ENCODE measurements at regions of chr9 and their contacts with region 1.

Region 1: GRCh38 chr9:131739980-131740648 is at the start of gene RAPGEF1:
- DNase-seq: peak; percentile 80
- H3K4me3 Mint-ChIP-seq: peak within 1 kb of the TSS; percentile 84
- H3K27ac Mint-ChIP-seq: peak within 1 kb of the TSS; percentile 87
- H3K4me1 Mint-ChIP-seq: peaks cover 61% of the 10 kb centered on the region
- H3K27me3 Mint-ChIP-seq: no peaks in the 10 kb centered on the region
- total RNA-seq, gene RAPGEF1: 128 to 129 TPM

Region 2: GRCh38 chr9:131590908-131591844 is 148.9 kb before region 1 on chr9:
- CTCF ChIA-PET with region 1: interaction called, 62 read pairs
- POLR2A ChIA-PET with region 1: no interaction called
- DNase-seq: peak; percentile 81
- H3K4me3 Mint-ChIP-seq: no peak overlapping the region
- H3K27ac Mint-ChIP-seq: peak overlapping the region; percentile 82
- H3K4me1 Mint-ChIP-seq: peaks cover 42% of the 10 kb centered on the region
- H3K27me3 Mint-ChIP-seq: no peaks in the 10 kb centered on the region

Region 3: GRCh38 chr9:131603199-131603598 is 136.9 kb before region 1 on chr9:
- CTCF ChIA-PET with region 1: interaction called, 15 read pairs
- POLR2A ChIA-PET with region 1: no interaction called
- DNase-seq: no peak
- H3K4me3 Mint-ChIP-seq: no peak overlapping the region
- H3K27ac Mint-ChIP-seq: peak overlapping the region; percentile 13
- H3K4me1 Mint-ChIP-seq: no peaks in the 10 kb centered on the region
- H3K27me3 Mint-ChIP-seq: no peaks in the 10 kb centered on the region

Region 4: DNA sequence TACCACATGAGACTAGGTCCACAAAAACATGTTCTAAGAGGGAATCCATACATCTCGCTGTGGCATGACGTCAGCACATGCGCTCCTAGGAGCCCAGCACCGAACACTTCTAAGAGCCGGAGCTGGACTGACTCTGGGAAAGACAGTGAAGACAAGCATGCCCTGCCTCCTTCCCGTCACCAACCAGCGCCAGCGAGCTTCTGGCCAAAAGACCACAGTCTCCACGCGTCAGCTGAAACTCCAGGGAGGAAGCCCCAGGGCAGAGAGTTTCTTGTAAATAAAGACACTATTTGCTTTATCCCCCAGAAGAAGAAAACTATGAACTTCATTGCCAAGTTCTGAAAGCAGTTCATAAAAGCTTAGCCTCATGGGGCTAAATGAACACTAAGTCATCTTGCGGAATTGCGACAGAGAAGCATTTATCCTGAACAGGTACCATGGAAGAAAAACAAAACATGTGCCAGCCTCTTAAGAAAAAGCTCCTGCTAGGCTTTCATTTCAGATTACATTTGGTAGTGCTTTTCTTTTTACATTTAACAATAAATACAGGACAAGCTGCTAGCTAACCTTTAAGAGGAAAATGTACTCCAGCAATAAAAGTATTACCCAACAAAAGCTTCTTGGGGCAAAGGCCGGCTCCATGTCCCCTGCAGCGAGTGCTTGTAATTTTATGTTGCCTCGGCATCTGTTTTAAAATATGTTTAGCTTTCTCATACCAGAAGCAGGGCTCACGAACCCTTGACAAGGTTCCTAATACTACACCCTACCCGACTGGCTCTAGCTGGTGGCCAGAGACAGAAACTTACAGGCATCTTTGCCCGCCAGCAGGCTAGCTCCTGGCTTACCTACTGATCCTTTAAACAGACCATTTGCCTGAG is 98.3 kb before region 1 on chr9:
- CTCF ChIA-PET with region 1: interaction called, 11 read pairs
- POLR2A ChIA-PET with region 1: no interaction called
- DNase-seq: no peak
- H3K4me3 Mint-ChIP-seq: no peak overlapping the region
- H3K27ac Mint-ChIP-seq: peak overlapping the region; percentile 92
- H3K4me1 Mint-ChIP-seq: peaks cover 40% of the 10 kb centered on the region
- H3K27me3 Mint-ChIP-seq: no peaks in the 10 kb centered on the region

Region 5: DNA sequence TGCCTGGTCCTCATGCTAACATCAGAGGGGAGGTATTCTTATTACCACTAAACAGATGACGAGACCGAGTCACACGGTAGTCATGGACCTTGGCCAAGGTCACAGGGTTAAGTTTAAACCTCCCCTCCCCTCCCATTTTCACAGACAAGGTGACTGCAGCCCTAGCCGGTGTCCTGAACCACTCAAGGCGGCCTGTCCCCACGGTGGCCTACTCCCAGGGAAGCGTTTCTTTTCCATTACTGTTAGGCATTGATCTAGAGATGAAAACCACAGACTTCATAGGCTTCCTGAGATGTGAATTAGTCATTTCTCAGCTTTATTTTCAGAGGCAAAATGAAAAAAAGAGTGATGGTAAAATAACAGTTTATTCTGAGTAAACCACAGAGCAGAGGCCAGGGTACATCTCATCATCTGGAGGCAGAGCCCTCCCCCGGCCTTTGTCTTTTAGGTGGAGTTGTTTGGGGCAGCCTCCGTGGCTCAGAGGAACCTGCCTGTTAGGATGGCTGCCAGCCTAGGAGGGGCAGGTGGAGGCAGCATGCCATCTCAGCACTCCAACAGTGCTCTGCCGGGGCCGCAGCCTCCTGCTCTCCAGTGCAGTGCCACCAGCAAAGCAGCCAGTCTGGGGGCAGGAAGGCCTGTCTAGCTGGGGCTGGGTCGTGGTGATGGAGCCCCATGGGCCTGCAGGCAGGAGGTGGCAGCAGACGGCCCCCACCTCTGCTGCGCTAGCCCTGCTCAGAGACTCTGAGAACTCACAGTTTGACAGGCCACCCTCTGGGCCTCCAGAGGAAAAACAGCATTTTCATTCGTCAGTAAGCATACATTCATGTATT is 71.5 kb before region 1 on chr9:
- CTCF ChIA-PET with region 1: interaction called, 19 read pairs
- POLR2A ChIA-PET with region 1: no interaction called
- DNase-seq: peak; percentile 74
- H3K4me3 Mint-ChIP-seq: peak overlapping the region; percentile 55
- H3K27ac Mint-ChIP-seq: peak overlapping the region; percentile 99
- H3K4me1 Mint-ChIP-seq: peaks cover 88% of the 10 kb centered on the region
- H3K27me3 Mint-ChIP-seq: no peaks in the 10 kb centered on the region

Region 6: GRCh38 chr9:131678499-131679111 is 61.5 kb before region 1 on chr9:
- CTCF ChIA-PET with region 1: interaction called, 33 read pairs
- POLR2A ChIA-PET with region 1: interaction called, 14 read pairs
- DNase-seq: peak; percentile 75
- H3K4me3 Mint-ChIP-seq: peak overlapping the region; percentile 7
- H3K27ac Mint-ChIP-seq: peak overlapping the region; percentile 92
- H3K4me1 Mint-ChIP-seq: peaks cover 84% of the 10 kb centered on the region
- H3K27me3 Mint-ChIP-seq: no peaks in the 10 kb centered on the region